Heart left ventricle (tissue), 16 donors: ENCODE measurements at regions of chr2 and their contacts with region 1.

Region 1: GRCh38 chr2:47842846-47843245 is 59.9 kb downstream of the MSH6 start:
- DNase-seq: no peak
- ATAC-seq: peak in 1 of 4 donors; percentile 29
- H3K4me3 ChIP-seq: no peak overlapping the region
- H3K27ac ChIP-seq: no peak overlapping the region
- H3K4me1 ChIP-seq: peaks cover 0 to 40% (median 27%) of the 10 kb centered on the region in 12 donors
- H3K27me3 ChIP-seq: no peaks in the 10 kb centered on the region
- CTCF ChIP-seq: no peak
- POLR2A ChIP-seq: no peak

Region 2: DNA sequence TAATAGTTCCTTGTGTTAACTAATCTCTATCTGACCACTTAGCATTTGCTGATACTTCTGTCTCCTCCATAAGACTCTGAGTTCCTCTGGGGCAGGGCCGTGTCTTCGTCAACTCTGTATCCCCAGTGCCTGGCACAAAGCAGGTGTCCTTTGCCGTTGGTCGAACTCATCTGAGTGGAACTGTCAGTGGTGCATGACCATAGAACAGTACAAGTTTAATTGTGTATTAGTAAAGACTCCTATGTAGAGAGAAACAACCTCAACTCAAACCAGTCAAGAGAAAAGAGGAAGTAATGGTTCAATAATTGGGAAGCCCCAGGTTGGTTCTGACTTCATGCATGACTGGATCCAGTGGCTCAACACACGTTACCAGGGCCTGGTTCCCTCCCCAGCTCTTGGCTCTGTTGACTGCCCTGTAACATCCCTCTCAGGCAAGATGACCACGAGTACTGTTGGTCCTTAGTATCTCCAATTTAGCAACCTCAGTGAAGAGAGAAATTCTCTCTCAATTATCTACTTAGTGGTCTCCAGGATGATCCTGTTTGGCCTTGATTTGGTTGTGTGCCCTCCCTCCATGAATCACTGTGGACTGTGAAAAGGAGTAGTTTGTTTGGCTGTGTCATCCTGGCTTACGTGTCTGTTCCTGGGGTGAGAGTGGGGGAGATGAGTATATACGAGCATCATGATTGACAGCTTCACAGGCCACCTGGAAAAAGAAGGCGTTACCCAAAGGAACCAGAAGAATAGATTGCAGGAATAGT is 118.4 kb before region 1 on chr2:
- intact Hi-C with region 1: no loop called
- DNase-seq: no peak
- ATAC-seq: no peak
- H3K4me3 ChIP-seq: no peak overlapping the region
- H3K27ac ChIP-seq: no peak overlapping the region
- H3K4me1 ChIP-seq: no peaks in the 10 kb centered on the region
- H3K27me3 ChIP-seq: no peaks in the 10 kb centered on the region
- CTCF ChIP-seq: no peak
- POLR2A ChIP-seq: no peak

Region 3: GRCh38 chr2:47897883-47898731 is 55.3 kb after region 1 on chr2:
- intact Hi-C with region 1: loop called in 2 of 10 experiments (anchors 10 kb)
- DNase-seq: no peak
- ATAC-seq: no peak
- H3K4me3 ChIP-seq: no peak overlapping the region
- H3K27ac ChIP-seq: peak overlapping the region in 1 of 12 donors; percentile 50
- H3K4me1 ChIP-seq: peaks cover 0 to 96% (median 63%) of the 10 kb centered on the region in 12 donors
- H3K27me3 ChIP-seq: no peaks in the 10 kb centered on the region
- CTCF ChIP-seq: no peak
- POLR2A ChIP-seq: no peak

Region 4: GRCh38 chr2:48912110-48912509 is 1069.3 kb after region 1 on chr2:
- intact Hi-C with region 1: no loop called
- DNase-seq: no peak
- ATAC-seq: no peak
- H3K4me3 ChIP-seq: no peak overlapping the region
- H3K27ac ChIP-seq: no peak overlapping the region
- H3K4me1 ChIP-seq: no peaks in the 10 kb centered on the region
- H3K27me3 ChIP-seq: no peaks in the 10 kb centered on the region
- CTCF ChIP-seq: peak in 2 of 12 donors; percentile 6 to 22
- POLR2A ChIP-seq: no peak